IMR-90 (cell line): ENCODE measurements at regions of chr7 and their contacts with region 1.

Region 1: DNA sequence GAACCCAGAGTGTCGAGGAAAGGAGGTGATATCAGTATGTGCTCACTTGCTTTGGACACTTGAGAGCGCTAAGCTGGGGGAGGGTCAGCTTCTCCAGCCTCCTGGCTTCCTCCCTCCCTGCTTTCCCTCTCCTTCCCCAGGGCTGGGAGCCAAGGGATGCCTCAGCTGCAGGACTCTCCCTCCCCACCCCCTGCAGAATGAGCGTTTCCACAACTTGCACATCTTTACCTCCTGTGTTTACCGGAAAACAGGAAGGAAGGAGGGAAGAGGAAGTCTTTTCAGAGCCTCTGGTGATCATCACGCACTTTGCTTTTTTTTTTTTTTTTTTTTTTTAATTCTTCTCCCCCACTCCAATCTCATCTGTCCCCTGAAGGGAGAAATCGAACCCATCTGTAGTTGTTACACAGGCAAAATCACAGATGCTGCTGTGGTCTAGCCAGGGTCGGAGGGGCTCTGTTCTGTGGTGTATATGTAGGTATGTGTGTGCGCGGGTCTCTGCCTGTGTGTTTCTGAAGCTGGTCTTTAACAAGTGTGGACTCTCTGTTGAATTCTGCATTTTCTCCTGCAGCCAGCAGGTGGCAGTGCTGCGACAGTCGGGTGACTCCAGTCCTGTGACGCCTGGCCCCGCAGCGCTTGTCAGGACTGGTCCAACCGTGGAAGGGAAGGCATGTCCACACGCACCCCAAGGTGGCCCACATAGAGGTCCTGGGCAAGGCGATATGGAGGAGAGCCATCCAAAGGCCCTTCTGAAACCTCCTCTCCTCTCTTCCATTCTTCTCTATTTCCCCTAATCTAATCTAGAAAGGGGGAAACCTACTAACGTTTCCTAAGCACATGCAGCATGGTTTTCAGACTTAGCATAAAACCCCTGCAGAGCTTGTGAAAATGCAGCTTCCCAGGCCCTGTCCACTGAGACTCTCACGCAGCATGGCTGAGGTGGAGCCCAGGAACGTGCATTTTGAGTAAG is 257.6 kb downstream of the PLXNA4 start:
- DNase-seq: peak; percentile 72
- ATAC-seq: peak; percentile 100
- H3K4me3 ChIP-seq: no peak overlapping the region
- H3K27ac ChIP-seq: no peak overlapping the region
- H3K4me1 ChIP-seq: no peaks in the 10 kb centered on the region
- H3K27me3 ChIP-seq: no peaks in the 10 kb centered on the region
- CTCF ChIP-seq: peak; percentile 82
- POLR2A ChIP-seq: no peak
- RAD21 ChIP-seq: peak; percentile 76

Region 2: GRCh38 chr7:132004536-132005272 is 313.9 kb before region 1 on chr7:
- CTCF ChIA-PET with region 1: no interaction called
- POLR2A ChIA-PET with region 1: no interaction called
- dilution Hi-C with region 1: no loop called
- in situ Hi-C with region 1: no loop called
- intact Hi-C with region 1: loop called (anchors 5 kb)
- DNase-seq: no peak
- ATAC-seq: peak; percentile 70; the same call in 1 of the 2 replicates
- H3K4me3 ChIP-seq: no peak overlapping the region
- H3K27ac ChIP-seq: no peak overlapping the region
- H3K4me1 ChIP-seq: no peaks in the 10 kb centered on the region
- H3K27me3 ChIP-seq: peaks cover 1% of the 10 kb centered on the region; the same call in 1 of the 2 replicates
- CTCF ChIP-seq: peak; percentile 36; the same call in 1 of the 2 replicates
- POLR2A ChIP-seq: no peak
- RAD21 ChIP-seq: peak; percentile 55

Region 3: GRCh38 chr7:132580717-132581285 is 262.2 kb after region 1 on chr7:
- CTCF ChIA-PET with region 1: interaction called, 8 read pairs
- POLR2A ChIA-PET with region 1: no interaction called
- dilution Hi-C with region 1: no loop called
- in situ Hi-C with region 1: loop called (anchors 10 kb)
- intact Hi-C with region 1: loop called (anchors 1 kb)
- DNase-seq: peak; percentile 64
- ATAC-seq: peak; percentile 72
- H3K4me3 ChIP-seq: no peak overlapping the region
- H3K27ac ChIP-seq: no peak overlapping the region
- H3K4me1 ChIP-seq: 0 out of 2 replicates have a peak, but pooled peaks cover 2% of the 10 kb centered on the region
- H3K27me3 ChIP-seq: peaks cover 25% of the 10 kb centered on the region
- CTCF ChIP-seq: peak; percentile 68
- POLR2A ChIP-seq: no peak
- RAD21 ChIP-seq: peak; percentile 66

Region 4: DNA sequence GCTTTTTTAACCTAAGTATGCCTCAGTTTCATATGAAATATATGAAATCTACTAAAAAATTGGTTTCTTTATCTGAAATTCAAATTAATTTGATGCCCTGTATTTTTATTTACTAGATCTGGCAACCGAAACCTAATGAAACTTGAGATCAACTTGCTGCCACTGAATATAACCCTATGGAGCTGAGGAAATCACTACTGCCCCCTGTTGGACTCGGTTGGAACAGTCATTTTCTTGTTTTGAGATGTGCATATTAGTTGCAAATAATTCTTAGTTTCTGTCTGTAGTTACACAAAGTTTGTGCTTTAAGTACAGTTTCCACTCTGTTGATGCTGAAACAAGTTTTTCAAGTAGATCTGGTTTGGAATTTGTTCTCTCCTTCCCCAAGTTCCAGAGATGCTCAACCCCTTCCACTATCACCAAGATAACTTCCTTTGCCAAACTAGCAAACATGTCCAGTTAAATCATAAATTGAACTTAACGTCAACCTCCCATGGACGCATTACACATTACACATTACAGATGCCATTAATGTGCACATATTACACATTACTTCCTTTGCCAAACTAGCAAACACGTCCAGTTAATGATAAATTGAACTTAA is 912.1 kb after region 1 on chr7:
- CTCF ChIA-PET with region 1: interaction called, 3 read pairs
- POLR2A ChIA-PET with region 1: no interaction called
- dilution Hi-C with region 1: no loop called
- in situ Hi-C with region 1: no loop called
- intact Hi-C with region 1: loop called (anchors 2 kb)
- DNase-seq: peak; percentile 56
- ATAC-seq: peak; percentile 73
- H3K4me3 ChIP-seq: no peak overlapping the region
- H3K27ac ChIP-seq: no peak overlapping the region
- H3K4me1 ChIP-seq: no peaks in the 10 kb centered on the region
- H3K27me3 ChIP-seq: peaks cover 7% of the 10 kb centered on the region
- CTCF ChIP-seq: peak; percentile 74
- POLR2A ChIP-seq: no peak
- RAD21 ChIP-seq: peak; percentile 73

Region 5: DNA sequence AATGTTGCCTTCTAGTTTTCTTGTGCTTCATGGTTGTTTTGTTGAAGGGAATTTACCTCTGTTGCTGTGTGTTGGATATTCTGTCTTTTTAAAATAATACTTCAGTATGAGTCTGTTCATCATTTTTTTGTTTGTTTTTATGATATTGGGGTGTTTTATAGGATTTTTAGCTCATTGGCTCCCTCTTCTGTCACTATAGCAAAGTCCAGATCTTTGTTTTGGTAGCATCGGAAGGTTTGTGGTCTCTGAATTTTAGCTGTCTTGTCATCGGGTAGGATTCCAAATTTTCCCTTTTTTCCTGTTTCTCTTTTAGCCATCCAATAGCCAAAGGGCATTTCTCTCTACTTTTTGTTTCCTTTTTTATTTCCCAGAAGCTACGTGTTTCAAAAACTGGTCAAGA is 1025.6 kb after region 1 on chr7:
- CTCF ChIA-PET with region 1: no interaction called
- POLR2A ChIA-PET with region 1: no interaction called
- dilution Hi-C with region 1: no loop called
- in situ Hi-C with region 1: no loop called
- intact Hi-C with region 1: loop called (anchors 1 kb)
- DNase-seq: peak; percentile 32
- ATAC-seq: peak; percentile 59
- H3K4me3 ChIP-seq: no peak overlapping the region
- H3K27ac ChIP-seq: no peak overlapping the region
- H3K4me1 ChIP-seq: no peaks in the 10 kb centered on the region
- H3K27me3 ChIP-seq: no peaks in the 10 kb centered on the region
- CTCF ChIP-seq: peak; percentile 63
- POLR2A ChIP-seq: no peak
- RAD21 ChIP-seq: peak; percentile 64

Region 6: GRCh38 chr7:134016223-134016941 is 1697.7 kb after region 1 on chr7:
- CTCF ChIA-PET with region 1: no interaction called
- POLR2A ChIA-PET with region 1: no interaction called
- dilution Hi-C with region 1: no loop called
- in situ Hi-C with region 1: no loop called
- intact Hi-C with region 1: loop called (anchors 10 kb)
- DNase-seq: peak; percentile 39
- ATAC-seq: peak; percentile 77
- H3K4me3 ChIP-seq: no peak overlapping the region
- H3K27ac ChIP-seq: no peak overlapping the region
- H3K4me1 ChIP-seq: no peaks in the 10 kb centered on the region
- H3K27me3 ChIP-seq: no peaks in the 10 kb centered on the region
- CTCF ChIP-seq: peak; percentile 67
- POLR2A ChIP-seq: no peak
- RAD21 ChIP-seq: peak; percentile 76